GM13977 (cell line): ENCODE measurements at regions of chr15 and their contacts with region 1.

Region 1: GRCh38 chr15:71455107-71455506 is 339.8 kb downstream of the THSD4 start:
- DNase-seq: no peak
- CTCF ChIP-seq: no peak

Region 2: DNA sequence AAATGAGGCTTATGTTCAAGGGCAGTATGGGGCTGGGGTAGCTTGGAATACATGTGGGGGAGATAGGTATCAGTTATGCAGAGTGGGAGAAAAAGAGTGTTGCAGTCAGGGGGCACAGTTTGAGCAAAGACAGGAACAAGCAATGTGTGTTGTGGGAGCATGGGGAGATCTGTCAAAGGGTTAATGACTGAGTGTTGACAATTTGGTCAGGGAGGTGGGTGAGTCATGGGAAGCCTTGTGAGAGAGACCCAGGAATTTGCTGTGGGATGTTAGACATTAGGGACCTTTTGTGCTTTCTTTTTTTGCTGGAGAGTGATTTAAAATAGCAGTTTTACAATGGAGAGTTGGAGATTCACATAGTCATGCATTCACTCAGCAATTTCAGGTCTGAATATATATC is 133.6 kb after region 1 on chr15:
- in situ Hi-C with region 1: no loop called
- DNase-seq: no peak
- CTCF ChIP-seq: no peak

Region 3: GRCh38 chr15:71649894-71650293 is 194.8 kb after region 1 on chr15:
- in situ Hi-C with region 1: loop called (anchors 10 kb)
- DNase-seq: no peak
- CTCF ChIP-seq: no peak